HCT116 (cell line): ENCODE measurements at regions of chr2 and their contacts with region 1.

Region 1: GRCh38 chr2:55014962-55015939 is 35.0 kb downstream of the RTN4 start:
- DNase-seq: peak; percentile 54
- ATAC-seq: peak; percentile 89
- H3K4me3 ChIP-seq: no peak overlapping the region
- H3K27ac ChIP-seq: no peak overlapping the region; the same call in 1 of the 2 replicates
- H3K4me1 ChIP-seq: peaks cover 32 to 59% of the 10 kb centered on the region in 2 experiments
- H3K27me3 ChIP-seq: no peaks in the 10 kb centered on the region
- CTCF ChIP-seq: peak; percentile 58 to 75 (median 70)
- POLR2A ChIP-seq: no peak
- RAD21 ChIP-seq: peak; percentile 84

Region 2: GRCh38 chr2:55168221-55169154 is 153.2 kb after region 1 on chr2:
- CTCF ChIA-PET with region 1: interaction called, 8 read pairs
- POLR2A ChIA-PET with region 1: no interaction called
- RAD21 ChIA-PET with region 1: no interaction called
- intact Hi-C with region 1: loop called (anchors 1 kb)
- DNase-seq: peak; percentile 29
- ATAC-seq: peak; percentile 86
- H3K4me3 ChIP-seq: no peak overlapping the region
- H3K27ac ChIP-seq: no peak overlapping the region
- H3K4me1 ChIP-seq: peaks cover 0 to 6% of the 10 kb centered on the region in 2 experiments; a peak in 2 of 4 replicates
- H3K27me3 ChIP-seq: no peaks in the 10 kb centered on the region
- CTCF ChIP-seq: peak; percentile 70 to 89 (median 87)
- POLR2A ChIP-seq: no peak
- RAD21 ChIP-seq: peak; percentile 94

Region 3: DNA sequence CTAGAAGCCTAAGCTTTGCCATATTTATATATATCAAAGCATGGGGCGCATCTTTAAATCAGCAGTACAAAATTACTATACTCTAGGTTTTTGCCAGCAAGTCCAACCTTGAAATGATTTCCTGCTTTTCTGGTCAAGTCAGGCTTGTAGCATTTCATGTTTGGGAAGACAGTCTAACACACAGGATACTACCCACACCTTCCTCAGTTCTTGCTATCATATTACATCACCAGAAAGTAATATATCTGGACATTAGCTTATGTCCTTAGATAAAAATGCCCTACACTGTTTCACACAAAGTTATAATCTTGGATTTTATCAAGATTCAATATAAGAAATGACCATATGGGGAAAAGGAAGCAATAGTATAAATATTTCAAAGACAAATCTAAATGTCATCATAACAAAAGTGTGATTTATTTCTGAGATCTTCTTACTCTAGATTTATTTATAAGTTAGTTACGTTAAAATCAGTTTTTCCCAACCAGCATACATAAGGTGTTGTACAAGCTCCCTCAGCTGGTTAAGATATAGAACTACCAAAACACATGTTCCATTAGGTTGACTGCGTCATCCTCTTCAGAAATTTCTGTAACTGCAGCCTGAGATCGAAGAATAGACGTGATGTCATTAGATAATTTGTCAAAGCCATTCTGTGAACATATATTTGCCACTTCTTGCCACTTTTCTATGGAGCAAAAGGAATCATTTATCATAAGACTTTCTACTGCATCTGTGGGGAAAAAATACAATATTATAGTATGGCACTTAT is 160.2 kb after region 1 on chr2:
- CTCF ChIA-PET with region 1: interaction called, 7 read pairs
- POLR2A ChIA-PET with region 1: no interaction called
- RAD21 ChIA-PET with region 1: no interaction called
- intact Hi-C with region 1: loop called (anchors 1 kb)
- DNase-seq: peak; percentile 37
- ATAC-seq: peak; percentile 81
- H3K4me3 ChIP-seq: no peak overlapping the region
- H3K27ac ChIP-seq: no peak overlapping the region
- H3K4me1 ChIP-seq: no peaks in the 10 kb centered on the region; a peak in 1 of 4 replicates
- H3K27me3 ChIP-seq: no peaks in the 10 kb centered on the region
- CTCF ChIP-seq: peak; percentile 34 to 69 (median 66); a peak in 4 of 6 replicates
- POLR2A ChIP-seq: no peak
- RAD21 ChIP-seq: peak; percentile 90

Region 4: GRCh38 chr2:55232084-55232862 is 217.0 kb after region 1 on chr2 and contains the starts of genes CLHC1 and RPS27A:
- CTCF ChIA-PET with region 1: no interaction called
- POLR2A ChIA-PET with region 1: no interaction called
- RAD21 ChIA-PET with region 1: no interaction called
- intact Hi-C with region 1: loop called (anchors 1 kb)
- DNase-seq: peak; percentile 98
- ATAC-seq: peak; percentile 89
- H3K4me3 ChIP-seq: peak within 1 kb of the TSS; percentile 77 to 91
- H3K27ac ChIP-seq: peak within 1 kb of the TSS; percentile 98
- H3K4me1 ChIP-seq: peaks cover 8 to 21% of the 10 kb centered on the region in 2 experiments
- H3K27me3 ChIP-seq: no peaks in the 10 kb centered on the region
- CTCF ChIP-seq: no peak
- POLR2A ChIP-seq: peak; percentile 73
- RAD21 ChIP-seq: no peak
- total RNA-seq, gene CLHC1: 11.1 TPM
- total RNA-seq, gene RPS27A: 1,291 TPM

Region 5: DNA sequence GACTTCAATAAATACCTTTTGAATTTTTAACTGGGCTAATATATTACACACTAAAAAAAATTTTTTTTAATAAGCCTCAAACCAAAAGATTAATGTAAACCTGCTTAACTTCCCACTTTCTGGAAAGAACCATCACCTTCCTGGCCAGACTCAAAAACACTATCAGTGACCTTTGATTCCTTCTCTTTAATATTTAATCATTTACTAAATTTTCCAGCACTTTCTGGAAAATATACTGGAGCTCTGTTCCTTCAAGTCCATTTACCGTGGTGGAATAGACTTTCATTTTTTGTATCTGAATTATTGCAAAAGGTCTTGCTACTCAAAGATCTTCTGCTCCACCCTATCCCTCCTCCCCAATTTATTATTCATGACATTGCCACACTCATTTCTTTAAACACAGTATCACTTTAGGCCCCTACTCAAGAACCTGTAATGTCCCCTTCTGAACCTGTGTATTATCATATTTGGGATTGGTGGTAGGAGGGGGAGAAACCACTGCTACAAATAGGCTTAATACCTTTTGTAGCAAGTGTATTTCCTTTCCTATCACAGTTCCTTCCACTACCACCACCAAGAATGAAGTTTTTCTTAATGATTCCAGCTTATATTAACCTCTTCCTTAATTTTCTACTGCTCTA is 594.8 kb after region 1 on chr2:
- CTCF ChIA-PET with region 1: no interaction called
- POLR2A ChIA-PET with region 1: no interaction called
- RAD21 ChIA-PET with region 1: no interaction called
- intact Hi-C with region 1: no loop called
- DNase-seq: no peak
- ATAC-seq: no peak
- H3K4me3 ChIP-seq: no peak overlapping the region
- H3K27ac ChIP-seq: no peak overlapping the region
- H3K4me1 ChIP-seq: peaks cover 0 to under 1% of the 10 kb centered on the region in 2 experiments; a peak in 1 of 4 replicates
- H3K27me3 ChIP-seq: no peaks in the 10 kb centered on the region
- CTCF ChIP-seq: no peak
- POLR2A ChIP-seq: no peak
- RAD21 ChIP-seq: no peak